ENCODE measurements at regions of chrX and their contacts with region 1.

Region 1: GRCh38 chrX:19772826-19773628 is 114.4 kb downstream of the SH3KBP1 start:
- DNase-seq: no peak
- ATAC-seq: peak; percentile 64
- H3K4me3 ChIP-seq: peak overlapping the region; percentile 2; the same call in 1 of the 2 replicates
- H3K27ac ChIP-seq: peak overlapping the region; percentile 90
- H3K4me1 ChIP-seq: peaks cover 61% of the 10 kb centered on the region
- H3K27me3 ChIP-seq: no peaks in the 10 kb centered on the region
- CTCF ChIP-seq: no peak
- EP300 ChIP-seq: peak in 1 of 2 experiments; percentile 24; a peak in 1 of 4 replicates
- POLR2A ChIP-seq: no peak
- RAD21 ChIP-seq: no peak

Region 2: GRCh38 chrX:19579485-19579884 is 193.5 kb before region 1 on chrX:
- CTCF ChIA-PET with region 1: no interaction called
- POLR2A ChIA-PET with region 1: no interaction called
- RAD21 ChIA-PET with region 1: no interaction called
- SMC1A ChIA-PET with region 1: no interaction called
- in situ Hi-C with region 1: no loop called
- intact Hi-C with region 1: no loop called
- DNase-seq: no peak
- ATAC-seq: no peak; the same call in 2 of the 3 replicates
- H3K4me3 ChIP-seq: no peak overlapping the region
- H3K27ac ChIP-seq: no peak overlapping the region
- H3K4me1 ChIP-seq: no peaks in the 10 kb centered on the region
- H3K27me3 ChIP-seq: no peaks in the 10 kb centered on the region
- CTCF ChIP-seq: no peak
- EP300 ChIP-seq: no peak
- POLR2A ChIP-seq: no peak
- RAD21 ChIP-seq: no peak

Region 3: GRCh38 chrX:19747652-19748610 is 25.1 kb before region 1 on chrX:
- CTCF ChIA-PET with region 1: interaction called, 16 read pairs
- POLR2A ChIA-PET with region 1: interaction called, 14 read pairs
- RAD21 ChIA-PET with region 1: interaction called, 80 read pairs
- SMC1A ChIA-PET with region 1: interaction called, 624 read pairs
- in situ Hi-C with region 1: no loop called
- intact Hi-C with region 1: loop called (anchors 2 kb)
- DNase-seq: no peak
- ATAC-seq: peak; percentile 48
- H3K4me3 ChIP-seq: no peak overlapping the region
- H3K27ac ChIP-seq: peak overlapping the region; percentile 91
- H3K4me1 ChIP-seq: peaks cover 59% of the 10 kb centered on the region
- H3K27me3 ChIP-seq: no peaks in the 10 kb centered on the region
- CTCF ChIP-seq: no peak
- EP300 ChIP-seq: peak in 1 of 2 experiments; percentile 33; a peak in 1 of 4 replicates
- POLR2A ChIP-seq: no peak
- RAD21 ChIP-seq: no peak

Region 4: DNA sequence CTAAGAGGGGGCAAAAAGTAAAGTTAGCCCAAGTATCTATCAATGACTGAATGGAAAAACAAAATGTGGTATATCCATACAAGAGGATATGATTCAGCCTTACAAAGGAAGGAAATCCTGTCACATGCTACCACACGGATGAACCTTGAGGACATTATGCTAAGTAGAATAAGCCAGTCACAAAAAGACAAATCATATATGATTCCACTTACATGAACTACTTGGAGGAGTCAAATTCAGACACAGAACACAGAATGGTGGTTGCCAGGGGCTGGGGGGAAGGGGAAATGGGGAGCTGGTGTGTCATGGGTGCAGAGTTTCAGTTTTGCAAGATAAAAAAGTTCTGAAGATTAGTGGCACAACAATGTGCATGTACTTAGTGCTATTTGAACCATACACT is 12.6 kb after region 1 on chrX:
- CTCF ChIA-PET with region 1: interaction called, 4 read pairs
- POLR2A ChIA-PET with region 1: interaction called, 23 read pairs
- RAD21 ChIA-PET with region 1: interaction called, 6 read pairs
- SMC1A ChIA-PET with region 1: interaction called, 83 read pairs
- in situ Hi-C with region 1: no loop called
- intact Hi-C with region 1: loop called (anchors 2 kb)
- DNase-seq: no peak
- ATAC-seq: peak; percentile 65
- H3K4me3 ChIP-seq: no peak overlapping the region
- H3K27ac ChIP-seq: no peak overlapping the region
- H3K4me1 ChIP-seq: peaks cover 6% of the 10 kb centered on the region
- H3K27me3 ChIP-seq: no peaks in the 10 kb centered on the region
- CTCF ChIP-seq: no peak
- EP300 ChIP-seq: no peak
- POLR2A ChIP-seq: no peak
- RAD21 ChIP-seq: no peak

Region 5: GRCh38 chrX:19805046-19805690 is 32.1 kb after region 1 on chrX:
- CTCF ChIA-PET with region 1: interaction called, 8 read pairs
- POLR2A ChIA-PET with region 1: interaction called, 6 read pairs
- RAD21 ChIA-PET with region 1: interaction called, 20 read pairs
- SMC1A ChIA-PET with region 1: interaction called, 49 read pairs
- in situ Hi-C with region 1: no loop called
- intact Hi-C with region 1: no loop called
- DNase-seq: no peak
- ATAC-seq: no peak; the same call in 2 of the 3 replicates
- H3K4me3 ChIP-seq: peak overlapping the region; percentile 12; the same call in 1 of the 2 replicates
- H3K27ac ChIP-seq: peak overlapping the region; percentile 48
- H3K4me1 ChIP-seq: peaks cover 32% of the 10 kb centered on the region
- H3K27me3 ChIP-seq: no peaks in the 10 kb centered on the region
- CTCF ChIP-seq: no peak
- EP300 ChIP-seq: no peak
- POLR2A ChIP-seq: no peak
- RAD21 ChIP-seq: no peak

Region 6: GRCh38 chrX:19846995-19847790 is 74.2 kb after region 1 on chrX:
- CTCF ChIA-PET with region 1: interaction called, 4 read pairs
- POLR2A ChIA-PET with region 1: interaction called, 4 read pairs
- RAD21 ChIA-PET with region 1: interaction called, 16 read pairs
- SMC1A ChIA-PET with region 1: interaction called, 11 read pairs
- in situ Hi-C with region 1: no loop called
- intact Hi-C with region 1: no loop called
- DNase-seq: no peak
- ATAC-seq: peak; percentile 55
- H3K4me3 ChIP-seq: 0 out of 2 replicates have a peak overlapping the region, but pooled peaks have one; percentile 8
- H3K27ac ChIP-seq: peak overlapping the region; percentile 79
- H3K4me1 ChIP-seq: peaks cover 38% of the 10 kb centered on the region
- H3K27me3 ChIP-seq: no peaks in the 10 kb centered on the region
- CTCF ChIP-seq: no peak
- EP300 ChIP-seq: no peak
- POLR2A ChIP-seq: no peak
- RAD21 ChIP-seq: no peak

Region 7: GRCh38 chrX:19875050-19875431 is 102.0 kb after region 1 on chrX:
- CTCF ChIA-PET with region 1: no interaction called
- POLR2A ChIA-PET with region 1: interaction called, 8 read pairs
- RAD21 ChIA-PET with region 1: interaction called, 4 read pairs
- SMC1A ChIA-PET with region 1: interaction called, 16 read pairs
- in situ Hi-C with region 1: no loop called
- intact Hi-C with region 1: no loop called
- DNase-seq: no peak
- ATAC-seq: peak; percentile 36
- H3K4me3 ChIP-seq: peak overlapping the region; percentile 46; the same call in 1 of the 2 replicates
- H3K27ac ChIP-seq: peak overlapping the region; percentile 68
- H3K4me1 ChIP-seq: peaks cover 24% of the 10 kb centered on the region
- H3K27me3 ChIP-seq: no peaks in the 10 kb centered on the region
- CTCF ChIP-seq: no peak
- EP300 ChIP-seq: no peak
- POLR2A ChIP-seq: no peak
- RAD21 ChIP-seq: no peak

Region 8: DNA sequence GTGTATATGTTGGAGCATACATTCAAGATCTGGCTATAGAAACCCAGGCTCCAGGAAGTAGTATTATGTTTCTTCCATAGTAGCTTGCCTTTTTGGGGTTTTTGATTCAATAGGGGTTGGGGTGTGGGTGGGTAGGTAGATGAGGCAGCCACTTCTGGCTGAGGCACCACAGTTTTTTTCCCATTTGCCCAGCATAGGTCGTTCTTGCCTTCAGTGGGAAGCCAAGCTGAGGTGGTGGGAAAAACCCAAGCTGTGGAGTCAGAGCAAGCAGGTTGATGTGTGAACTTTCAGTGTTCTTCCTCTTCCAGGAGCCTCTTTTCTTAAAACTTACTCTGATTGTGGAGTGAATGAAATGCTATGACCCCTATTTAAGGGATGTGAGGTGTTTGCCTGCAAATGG is 560.6 kb after region 1 on chrX:
- CTCF ChIA-PET with region 1: no interaction called
- POLR2A ChIA-PET with region 1: no interaction called
- RAD21 ChIA-PET with region 1: no interaction called
- SMC1A ChIA-PET with region 1: no interaction called
- in situ Hi-C with region 1: no loop called
- intact Hi-C with region 1: no loop called
- DNase-seq: no peak
- ATAC-seq: no peak
- H3K4me3 ChIP-seq: no peak overlapping the region
- H3K27ac ChIP-seq: no peak overlapping the region
- H3K4me1 ChIP-seq: no peaks in the 10 kb centered on the region
- H3K27me3 ChIP-seq: no peaks in the 10 kb centered on the region; a peak in 1 of 4 replicates
- CTCF ChIP-seq: no peak
- EP300 ChIP-seq: no peak
- POLR2A ChIP-seq: no peak
- RAD21 ChIP-seq: no peak

Measured in GM12878 (cell line).